H1 (cell line): ENCODE measurements at regions of chr7 and their contacts with region 1.

Region 1: GRCh38 chr7:127792528-127793342 is 140.7 kb downstream of the SND1 start:
- DNase-seq: peak; percentile 39 to 89
- H3K4me3 ChIP-seq: no peak overlapping the region
- H3K27ac ChIP-seq: no peak overlapping the region
- H3K4me1 ChIP-seq: peaks cover 0 to 6% (median 3%) of the 10 kb centered on the region in 4 experiments; a peak in 5 of 7 replicates
- H3K27me3 ChIP-seq: no peaks in the 10 kb centered on the region
- CTCF ChIP-seq: peak; percentile 84 to 99 (median 87)
- EP300 ChIP-seq: no peak
- POLR2A ChIP-seq: no peak
- RAD21 ChIP-seq: peak; percentile 69 to 83

Region 2: GRCh38 chr7:127717502-127718339 is 75.0 kb before region 1 on chr7:
- CTCF ChIA-PET with region 1: interaction called, 91 read pairs
- POLR2A ChIA-PET with region 1: no interaction called
- DNase-seq: no peak
- H3K4me3 ChIP-seq: no peak overlapping the region
- H3K27ac ChIP-seq: no peak overlapping the region
- H3K4me1 ChIP-seq: no peaks in the 10 kb centered on the region
- H3K27me3 ChIP-seq: no peaks in the 10 kb centered on the region
- CTCF ChIP-seq: no peak
- EP300 ChIP-seq: no peak
- POLR2A ChIP-seq: no peak
- RAD21 ChIP-seq: no peak

Region 3: DNA sequence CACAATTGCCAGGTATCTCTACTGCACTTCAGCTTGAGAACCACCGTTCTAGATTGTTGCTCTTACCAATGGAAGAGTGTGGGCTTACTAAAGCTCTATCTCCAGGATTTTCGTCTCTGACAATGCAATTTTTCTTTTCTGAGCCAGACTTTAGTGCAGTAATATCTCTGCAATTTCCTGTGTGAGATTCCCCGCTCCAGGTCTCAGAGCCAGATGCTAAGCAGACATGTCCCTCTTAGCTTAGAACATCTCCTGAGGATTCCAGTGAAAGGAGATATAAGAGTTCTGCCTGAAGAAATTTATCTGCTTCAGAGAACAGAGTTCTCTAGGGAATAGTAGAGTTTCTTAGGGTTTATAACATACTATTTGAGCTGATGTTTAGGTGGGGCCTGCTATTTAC is 58.7 kb before region 1 on chr7:
- CTCF ChIA-PET with region 1: interaction called, 24 read pairs
- POLR2A ChIA-PET with region 1: no interaction called
- DNase-seq: no peak
- H3K4me3 ChIP-seq: no peak overlapping the region
- H3K27ac ChIP-seq: no peak overlapping the region
- H3K4me1 ChIP-seq: peaks cover 1 to 12% (median 9%) of the 10 kb centered on the region in 4 experiments; a peak in 6 of 7 replicates
- H3K27me3 ChIP-seq: no peaks in the 10 kb centered on the region
- CTCF ChIP-seq: no peak
- EP300 ChIP-seq: no peak
- POLR2A ChIP-seq: no peak
- RAD21 ChIP-seq: no peak

Region 4: DNA sequence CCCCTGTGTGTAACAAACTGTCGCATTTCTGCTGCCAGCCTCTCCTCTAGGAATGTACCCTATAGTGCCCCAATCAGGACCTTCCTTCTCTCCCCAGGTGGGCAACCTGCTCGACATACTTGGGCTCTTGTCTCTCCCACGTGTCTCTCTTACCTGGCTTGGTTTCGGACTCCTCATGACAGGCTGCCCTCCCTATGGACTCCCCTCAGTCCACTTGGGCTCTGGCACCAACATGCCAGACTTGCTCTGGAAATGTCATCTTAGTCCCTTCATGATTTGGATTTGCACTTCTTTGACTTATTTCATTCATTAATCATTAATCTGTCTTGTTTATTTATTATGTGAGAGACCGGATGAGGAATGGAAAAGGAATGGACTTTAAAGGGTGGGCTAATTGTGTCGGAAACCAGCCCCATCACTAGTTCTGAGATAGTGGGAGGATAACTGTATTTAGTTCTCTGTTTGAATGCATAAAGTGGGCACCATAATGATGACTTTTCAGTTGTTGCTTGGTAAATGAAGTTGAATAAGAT is 32.8 kb before region 1 on chr7:
- CTCF ChIA-PET with region 1: interaction called, 20 read pairs
- POLR2A ChIA-PET with region 1: no interaction called
- DNase-seq: no peak
- H3K4me3 ChIP-seq: no peak overlapping the region
- H3K27ac ChIP-seq: no peak overlapping the region
- H3K4me1 ChIP-seq: peaks cover 0 to 7% (median 4%) of the 10 kb centered on the region in 4 experiments; a peak in 3 of 7 replicates
- H3K27me3 ChIP-seq: no peaks in the 10 kb centered on the region
- CTCF ChIP-seq: no peak
- EP300 ChIP-seq: no peak
- POLR2A ChIP-seq: no peak
- RAD21 ChIP-seq: no peak

Region 5: GRCh38 chr7:127776776-127777386 is 15.9 kb before region 1 on chr7:
- CTCF ChIA-PET with region 1: interaction called, 39 read pairs
- POLR2A ChIA-PET with region 1: interaction called, 3 read pairs
- DNase-seq: no peak
- H3K4me3 ChIP-seq: no peak overlapping the region
- H3K27ac ChIP-seq: no peak overlapping the region
- H3K4me1 ChIP-seq: peaks cover 0 to 3% (median 1%) of the 10 kb centered on the region in 4 experiments; a peak in 3 of 7 replicates
- H3K27me3 ChIP-seq: no peaks in the 10 kb centered on the region
- CTCF ChIP-seq: no peak
- EP300 ChIP-seq: no peak
- POLR2A ChIP-seq: no peak
- RAD21 ChIP-seq: no peak

Region 6: DNA sequence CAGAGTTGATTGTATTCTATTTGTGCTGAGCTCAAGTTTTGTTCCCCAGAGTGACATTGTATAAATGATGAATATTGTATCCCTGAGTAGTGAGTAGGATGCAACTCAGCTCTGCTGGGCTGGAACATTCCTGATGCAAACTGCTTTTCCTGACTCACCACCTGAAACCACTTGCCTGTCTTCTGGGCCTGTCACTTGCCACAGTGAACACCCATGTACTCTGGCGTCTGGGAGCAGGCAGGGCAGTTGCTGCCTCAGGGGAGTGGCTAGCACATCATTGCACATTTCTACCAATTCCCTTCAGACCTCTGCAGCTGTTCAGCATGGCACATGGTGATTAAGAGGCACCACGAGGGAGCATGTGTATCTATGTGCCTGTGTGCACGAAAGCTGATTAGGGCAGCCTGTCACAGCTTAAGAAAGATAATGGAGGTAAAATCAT is 16.5 kb after region 1 on chr7:
- CTCF ChIA-PET with region 1: interaction called, 33 read pairs
- POLR2A ChIA-PET with region 1: interaction called, 5 read pairs
- DNase-seq: no peak
- H3K4me3 ChIP-seq: no peak overlapping the region
- H3K27ac ChIP-seq: no peak overlapping the region
- H3K4me1 ChIP-seq: peaks cover 6 to 25% (median 20%) of the 10 kb centered on the region in 4 experiments; a peak in 6 of 7 replicates
- H3K27me3 ChIP-seq: no peaks in the 10 kb centered on the region
- CTCF ChIP-seq: no peak
- EP300 ChIP-seq: no peak
- POLR2A ChIP-seq: no peak
- RAD21 ChIP-seq: no peak

Region 7: DNA sequence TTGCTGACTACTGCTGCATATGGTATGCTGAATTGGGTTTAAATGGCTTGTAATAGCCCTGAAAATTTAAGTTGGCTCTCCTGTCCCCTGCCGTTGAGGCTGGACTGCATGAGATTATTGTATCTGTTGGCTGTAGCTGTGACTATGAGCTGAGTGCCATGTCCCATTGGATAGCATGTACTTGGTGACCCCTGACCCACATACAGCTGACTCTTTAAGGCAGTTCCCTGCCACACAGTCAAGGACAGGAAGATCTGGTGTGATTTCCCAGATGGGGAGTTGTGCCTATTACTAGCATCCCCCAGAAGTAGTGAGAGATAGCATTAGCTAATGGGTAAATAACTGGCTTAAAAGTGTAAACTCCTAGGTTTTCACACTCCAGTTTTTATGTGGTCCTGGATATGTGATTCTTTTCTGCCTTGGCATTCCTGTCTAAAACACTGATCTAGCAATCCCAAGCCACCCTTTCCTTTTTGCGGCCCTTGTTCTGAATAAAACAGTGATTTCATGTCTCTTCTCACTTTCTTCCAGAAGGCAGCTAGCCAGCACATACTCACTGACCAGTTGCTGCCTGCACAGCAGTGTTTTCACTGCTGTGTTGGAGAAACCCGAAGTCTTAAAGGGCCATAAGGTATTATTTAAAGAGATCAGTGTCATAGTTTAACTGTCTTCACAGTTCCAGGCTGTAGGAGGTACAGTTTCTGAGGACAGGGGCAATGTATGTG is 202.6 kb after region 1 on chr7:
- CTCF ChIA-PET with region 1: no interaction called
- POLR2A ChIA-PET with region 1: no interaction called
- DNase-seq: no peak
- H3K4me3 ChIP-seq: no peak overlapping the region
- H3K27ac ChIP-seq: no peak overlapping the region
- H3K4me1 ChIP-seq: peaks cover 2 to 15% (median 9%) of the 10 kb centered on the region in 4 experiments; a peak in 6 of 7 replicates
- H3K27me3 ChIP-seq: no peaks in the 10 kb centered on the region
- CTCF ChIP-seq: no peak
- EP300 ChIP-seq: no peak
- POLR2A ChIP-seq: no peak
- RAD21 ChIP-seq: no peak